GM12878 (cell line): ENCODE measurements at regions of chr1 and their contacts with region 1.

Region 1: GRCh38 chr1:107436552-107437241 is 295.9 kb downstream of the NTNG1 start:
- DNase-seq: no peak
- ATAC-seq: no peak
- H3K4me3 ChIP-seq: no peak overlapping the region
- H3K27ac ChIP-seq: no peak overlapping the region
- H3K4me1 ChIP-seq: peaks cover 6% of the 10 kb centered on the region; the same call in 1 of the 2 replicates
- H3K27me3 ChIP-seq: no peaks in the 10 kb centered on the region
- CTCF ChIP-seq: no peak
- EP300 ChIP-seq: no peak
- POLR2A ChIP-seq: no peak
- RAD21 ChIP-seq: no peak

Region 2: GRCh38 chr1:107394301-107394700 is 42.4 kb before region 1 on chr1:
- CTCF ChIA-PET with region 1: no interaction called
- POLR2A ChIA-PET with region 1: no interaction called
- RAD21 ChIA-PET with region 1: no interaction called
- SMC1A ChIA-PET with region 1: no interaction called
- in situ Hi-C with region 1: no loop called
- intact Hi-C with region 1: no loop called
- DNase-seq: no peak
- ATAC-seq: no peak
- H3K4me3 ChIP-seq: no peak overlapping the region
- H3K27ac ChIP-seq: no peak overlapping the region
- H3K4me1 ChIP-seq: no peaks in the 10 kb centered on the region
- H3K27me3 ChIP-seq: no peaks in the 10 kb centered on the region; a peak in 1 of 4 replicates
- CTCF ChIP-seq: no peak
- EP300 ChIP-seq: no peak
- POLR2A ChIP-seq: no peak
- RAD21 ChIP-seq: no peak

Region 3: GRCh38 chr1:107450899-107451664 is 14.4 kb after region 1 on chr1:
- CTCF ChIA-PET with region 1: interaction called, 110 read pairs
- POLR2A ChIA-PET with region 1: interaction called, 6 read pairs
- RAD21 ChIA-PET with region 1: interaction called, 93 read pairs
- SMC1A ChIA-PET with region 1: interaction called, 92 read pairs
- in situ Hi-C with region 1: no loop called
- intact Hi-C with region 1: loop called (anchors 2 kb)
- DNase-seq: peak; percentile 72
- ATAC-seq: peak; percentile 93
- H3K4me3 ChIP-seq: peak overlapping the region; percentile 45; the same call in 1 of the 2 replicates
- H3K27ac ChIP-seq: peak overlapping the region; percentile 96
- H3K4me1 ChIP-seq: peaks cover 29% of the 10 kb centered on the region
- H3K27me3 ChIP-seq: no peaks in the 10 kb centered on the region
- CTCF ChIP-seq: no peak
- EP300 ChIP-seq: peak; percentile 80 to 91; a peak in 3 of 4 replicates
- POLR2A ChIP-seq: peak; percentile 59
- RAD21 ChIP-seq: no peak

Region 4: GRCh38 chr1:107575226-107575625 is 138.5 kb after region 1 on chr1:
- CTCF ChIA-PET with region 1: no interaction called
- POLR2A ChIA-PET with region 1: no interaction called
- RAD21 ChIA-PET with region 1: no interaction called
- SMC1A ChIA-PET with region 1: no interaction called
- in situ Hi-C with region 1: no loop called
- intact Hi-C with region 1: no loop called
- DNase-seq: no peak
- ATAC-seq: no peak
- H3K4me3 ChIP-seq: no peak overlapping the region
- H3K27ac ChIP-seq: no peak overlapping the region
- H3K4me1 ChIP-seq: no peaks in the 10 kb centered on the region
- H3K27me3 ChIP-seq: no peaks in the 10 kb centered on the region
- CTCF ChIP-seq: no peak
- EP300 ChIP-seq: no peak
- POLR2A ChIP-seq: no peak
- RAD21 ChIP-seq: no peak